ENCODE measurements at regions of chr12 and their contacts with region 1.

Region 1: GRCh38 chr12:55738123-55739024 is 4.5 kb upstream of the GDF11 start:
- DNase-seq: peak; percentile 79 to 87 (median 83)
- H3K4me3 ChIP-seq: peak overlapping the region; percentile 39 to 75
- H3K4me3 Mint-ChIP-seq: peak overlapping the region; percentile 87 to 95 (median 90)
- H3K27ac ChIP-seq: peak overlapping the region; percentile 76
- H3K27ac Mint-ChIP-seq: peak overlapping the region; percentile 82 to 97 (median 96)
- H3K4me1 ChIP-seq: peaks cover 19% of the 10 kb centered on the region
- H3K4me1 Mint-ChIP-seq: peaks cover 21 to 38% (median 26%) of the 10 kb centered on the region in 4 donors
- H3K27me3 ChIP-seq: no peaks in the 10 kb centered on the region
- H3K27me3 Mint-ChIP-seq: no peaks in the 10 kb centered on the region

Region 2: DNA sequence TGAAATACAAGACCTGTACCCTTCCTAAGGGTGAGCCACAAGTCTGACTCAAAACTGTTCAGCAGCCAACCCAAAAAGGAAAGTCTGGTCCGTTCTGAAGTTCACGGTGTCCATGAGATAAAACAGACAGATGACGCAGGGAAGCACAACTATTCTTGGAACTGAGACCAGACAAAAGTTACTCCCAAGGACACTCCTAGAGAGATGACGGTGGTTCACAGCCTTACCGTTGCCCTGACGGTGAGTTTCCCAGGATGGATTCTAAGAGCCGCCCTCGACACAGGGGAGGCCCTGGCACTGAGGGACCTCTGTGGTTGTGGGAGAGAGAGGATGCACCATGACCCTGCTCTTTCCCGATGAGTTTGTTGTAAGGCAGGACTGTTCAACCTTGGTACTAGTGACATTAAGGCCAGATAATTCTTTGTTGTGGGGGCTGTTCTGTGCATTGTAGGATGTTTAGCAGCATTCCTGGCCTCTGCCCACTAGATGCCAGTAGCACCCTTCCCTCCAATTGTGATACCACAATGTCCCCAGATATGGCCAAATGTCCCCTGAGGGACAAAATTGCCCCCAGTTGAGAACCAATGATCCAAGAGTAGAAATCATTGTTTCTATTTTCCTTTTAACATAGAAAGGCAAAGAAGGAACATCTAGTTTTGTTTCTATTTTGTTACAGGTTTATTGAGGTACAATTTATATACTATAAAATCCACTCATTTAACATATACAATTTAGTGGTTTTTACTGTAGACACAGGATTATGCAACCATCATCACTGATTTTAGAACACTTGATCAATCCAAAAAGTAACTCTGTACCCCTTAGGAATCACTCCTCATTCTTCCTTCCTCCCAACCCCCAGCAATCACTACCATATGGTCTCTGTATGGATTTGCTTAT is 78.6 kb before region 1 on chr12:
- CTCF ChIA-PET with region 1: interaction called, 12 read pairs
- POLR2A ChIA-PET with region 1: no interaction called
- intact Hi-C with region 1: no loop called
- DNase-seq: no peak
- H3K4me3 ChIP-seq: no peak overlapping the region
- H3K4me3 Mint-ChIP-seq: no peak overlapping the region
- H3K27ac ChIP-seq: no peak overlapping the region
- H3K27ac Mint-ChIP-seq: peak overlapping the region in 1 of 7 donors; percentile 25
- H3K4me1 ChIP-seq: no peaks in the 10 kb centered on the region
- H3K4me1 Mint-ChIP-seq: peaks cover 0 to 2% (median under 1%) of the 10 kb centered on the region in 4 donors
- H3K27me3 ChIP-seq: no peaks in the 10 kb centered on the region
- H3K27me3 Mint-ChIP-seq: peaks cover 3 to 4% of the 10 kb centered on the region in 2 donors

Region 3: GRCh38 chr12:55797068-55797467 is 58.7 kb after region 1 on chr12:
- CTCF ChIA-PET with region 1: interaction called, 60 read pairs
- POLR2A ChIA-PET with region 1: interaction called, 7 read pairs
- intact Hi-C with region 1: loop called (anchors 1 kb)
- DNase-seq: peak in 1 of 5 donors; percentile 12
- H3K4me3 ChIP-seq: no peak overlapping the region
- H3K4me3 Mint-ChIP-seq: no peak overlapping the region
- H3K27ac ChIP-seq: no peak overlapping the region
- H3K27ac Mint-ChIP-seq: peak overlapping the region in 3 of 7 donors; percentile 1 to 83 (median 78)
- H3K4me1 ChIP-seq: no peaks in the 10 kb centered on the region
- H3K4me1 Mint-ChIP-seq: peaks cover 0 to 9% (median 2%) of the 10 kb centered on the region in 4 donors
- H3K27me3 ChIP-seq: no peaks in the 10 kb centered on the region
- H3K27me3 Mint-ChIP-seq: no peaks in the 10 kb centered on the region

Region 4: GRCh38 chr12:55940065-55940732 is 201.8 kb after region 1 on chr12:
- CTCF ChIA-PET with region 1: interaction called, 48 read pairs
- POLR2A ChIA-PET with region 1: interaction called, 201 read pairs
- intact Hi-C with region 1: loop called (anchors 1 kb)
- DNase-seq: peak; percentile 83 to 86 (median 84)
- H3K4me3 ChIP-seq: peak overlapping the region in 1 of 2 donors; percentile 4
- H3K4me3 Mint-ChIP-seq: peak overlapping the region in 7 of 8 donors; percentile 32 to 76 (median 62)
- H3K27ac ChIP-seq: peak overlapping the region; percentile 48
- H3K27ac Mint-ChIP-seq: peak overlapping the region; percentile 82 to 96 (median 92)
- H3K4me1 ChIP-seq: peaks cover 66% of the 10 kb centered on the region
- H3K4me1 Mint-ChIP-seq: peaks cover 56 to 89% (median 66%) of the 10 kb centered on the region in 4 donors
- H3K27me3 ChIP-seq: no peaks in the 10 kb centered on the region
- H3K27me3 Mint-ChIP-seq: no peaks in the 10 kb centered on the region

Region 5: GRCh38 chr12:56041552-56042429 is 303.4 kb after region 1 on chr12 and contains the start of gene RPS26:
- CTCF ChIA-PET with region 1: interaction called, 8 read pairs
- POLR2A ChIA-PET with region 1: interaction called, 16 read pairs
- intact Hi-C with region 1: loop called (anchors 2 kb)
- DNase-seq: peak; percentile 95 to 98 (median 96)
- H3K4me3 ChIP-seq: peak within 1 kb of the TSS; percentile 94 to 97
- H3K4me3 Mint-ChIP-seq: peak within 1 kb of the TSS; percentile 98 to 100 (median 99)
- H3K27ac ChIP-seq: peak within 1 kb of the TSS; percentile 87
- H3K27ac Mint-ChIP-seq: peak within 1 kb of the TSS; percentile 96 to 100 (median 99)
- H3K4me1 ChIP-seq: peaks cover 23% of the 10 kb centered on the region
- H3K4me1 Mint-ChIP-seq: peaks cover 15 to 45% (median 23%) of the 10 kb centered on the region in 4 donors
- H3K27me3 ChIP-seq: no peaks in the 10 kb centered on the region
- H3K27me3 Mint-ChIP-seq: no peaks in the 10 kb centered on the region
- total RNA-seq, gene RPS26: 55.6 to 55.8 TPM

Region 6: GRCh38 chr12:56299853-56300643 is 561.7 kb after region 1 on chr12 and contains the start of gene CS:
- CTCF ChIA-PET with region 1: no interaction called
- POLR2A ChIA-PET with region 1: no interaction called
- intact Hi-C with region 1: loop called (anchors 1 kb)
- DNase-seq: peak; percentile 98 to 99 (median 99)
- H3K4me3 ChIP-seq: peak within 1 kb of the TSS; percentile 79 to 97
- H3K4me3 Mint-ChIP-seq: peak within 1 kb of the TSS; percentile 90 to 97 (median 96)
- H3K27ac ChIP-seq: peak within 1 kb of the TSS; percentile 99
- H3K27ac Mint-ChIP-seq: peak within 1 kb of the TSS; percentile 95 to 99 (median 98)
- H3K4me1 ChIP-seq: peaks cover 57% of the 10 kb centered on the region
- H3K4me1 Mint-ChIP-seq: peaks cover 31 to 66% (median 50%) of the 10 kb centered on the region in 4 donors
- H3K27me3 ChIP-seq: no peaks in the 10 kb centered on the region
- H3K27me3 Mint-ChIP-seq: no peaks in the 10 kb centered on the region
- total RNA-seq, gene CS: 134 to 136 TPM

Measured in CD4-positive, alpha-beta memory T cell (primary cell).